ENCODE measurements at regions of chr4 and their contacts with region 1.

Region 1: DNA sequence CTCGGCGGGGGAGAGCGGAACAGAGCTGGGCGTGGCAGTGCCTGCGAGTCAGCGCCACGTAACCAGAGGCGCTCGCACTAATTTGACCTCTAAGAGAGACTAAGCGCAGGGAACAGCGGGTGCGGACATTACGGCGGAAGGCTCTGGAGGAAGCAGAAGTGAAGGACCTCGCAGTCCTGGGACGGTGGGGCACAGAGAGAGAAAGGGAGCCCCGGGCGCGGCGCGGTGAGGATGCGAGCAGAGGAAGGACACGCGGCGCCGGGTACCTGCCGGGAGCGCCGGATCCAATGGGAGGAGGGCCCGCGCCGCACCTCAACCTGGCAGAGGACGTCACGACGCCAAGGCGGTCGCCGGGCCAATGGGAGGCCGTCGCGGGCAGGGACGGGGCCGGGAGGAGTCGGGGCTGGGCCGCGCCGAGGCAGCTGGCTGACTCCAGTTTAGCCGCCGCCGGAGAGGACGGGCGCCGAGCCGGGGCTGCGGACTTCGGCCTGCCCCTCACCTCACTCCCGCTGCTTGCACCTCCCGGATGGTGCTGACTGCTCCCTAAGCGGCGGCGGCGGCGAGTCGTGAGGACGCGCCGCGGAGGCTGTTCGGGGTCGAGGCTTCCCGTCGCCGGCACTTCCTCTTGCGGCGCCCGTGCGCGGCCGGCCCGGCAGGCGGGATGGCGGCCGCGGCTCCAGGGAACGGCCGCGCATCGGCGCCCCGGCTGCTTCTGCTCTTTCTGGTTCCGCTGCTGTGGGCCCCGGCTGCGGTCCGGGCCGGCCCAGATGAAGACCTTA is at the start of gene TMEM165:
- DNase-seq: peak; percentile 77 to 92 (median 87)
- ATAC-seq: peak; percentile 94
- H3K4me3 ChIP-seq: peak within 1 kb of the TSS; percentile 88
- H3K4me3 Mint-ChIP-seq: peak within 1 kb of the TSS; percentile 94 to 99 (median 96)
- H3K27ac ChIP-seq: peak within 1 kb of the TSS; percentile 89
- H3K27ac Mint-ChIP-seq: peak within 1 kb of the TSS; percentile 89 to 99 (median 96)
- H3K4me1 ChIP-seq: peaks cover 27 to 31% of the 10 kb centered on the region in 2 donors
- H3K4me1 Mint-ChIP-seq: peaks cover 29 to 49% (median 39%) of the 10 kb centered on the region in 7 donors
- H3K27me3 ChIP-seq: no peaks in the 10 kb centered on the region
- H3K27me3 Mint-ChIP-seq: no peaks in the 10 kb centered on the region
- total RNA-seq, gene TMEM165: 53.1 to 80.9 (median 58.9) TPM

Region 2: DNA sequence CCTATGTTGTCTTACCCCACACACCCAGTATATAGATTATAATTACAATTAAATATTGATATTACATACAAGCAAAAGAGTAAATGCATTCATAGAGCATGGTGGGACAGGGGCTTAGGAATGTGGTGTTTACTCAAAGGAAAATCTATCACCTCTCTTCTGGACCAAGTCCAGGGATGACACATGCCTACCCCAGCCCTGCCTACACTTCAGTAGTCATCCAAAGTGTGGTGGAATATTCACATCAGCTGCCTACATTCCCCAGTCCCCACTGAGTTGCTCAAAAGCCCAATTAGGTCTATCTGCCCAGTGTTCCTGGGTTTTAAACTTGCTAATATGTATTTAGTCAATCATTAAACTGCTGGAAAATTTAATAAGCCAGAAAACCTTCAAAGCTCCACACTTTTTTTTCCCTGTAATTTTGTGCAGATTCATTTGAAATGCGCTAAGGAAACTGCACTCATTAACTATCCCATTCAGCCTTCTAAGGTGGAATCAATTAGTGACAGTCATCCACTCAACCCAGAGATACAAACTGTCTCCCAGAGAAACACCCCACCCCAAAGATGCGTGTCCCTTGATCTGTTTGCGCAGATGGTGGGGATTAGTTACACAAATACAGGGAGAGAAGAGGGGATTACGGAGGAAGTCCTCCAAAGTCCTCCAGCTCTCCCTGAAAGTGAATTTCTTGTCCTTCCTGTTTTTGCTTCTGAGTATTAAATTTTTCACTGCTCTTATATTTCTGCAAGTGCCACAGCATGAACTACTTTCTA is 178.7 kb before region 1 on chr4:
- CTCF ChIA-PET with region 1: no interaction called
- POLR2A ChIA-PET with region 1: no interaction called
- intact Hi-C with region 1: no loop called
- DNase-seq: no peak
- ATAC-seq: no peak
- H3K4me3 ChIP-seq: no peak overlapping the region
- H3K4me3 Mint-ChIP-seq: no peak overlapping the region
- H3K27ac ChIP-seq: no peak overlapping the region
- H3K27ac Mint-ChIP-seq: no peak overlapping the region
- H3K4me1 ChIP-seq: no peaks in the 10 kb centered on the region
- H3K4me1 Mint-ChIP-seq: peaks cover 0 to 4% (median 0%) of the 10 kb centered on the region in 7 donors
- H3K27me3 ChIP-seq: peaks cover 0 to 2% of the 10 kb centered on the region in 2 donors
- H3K27me3 Mint-ChIP-seq: peaks cover 0 to 17% (median 12%) of the 10 kb centered on the region in 5 donors

Region 3: DNA sequence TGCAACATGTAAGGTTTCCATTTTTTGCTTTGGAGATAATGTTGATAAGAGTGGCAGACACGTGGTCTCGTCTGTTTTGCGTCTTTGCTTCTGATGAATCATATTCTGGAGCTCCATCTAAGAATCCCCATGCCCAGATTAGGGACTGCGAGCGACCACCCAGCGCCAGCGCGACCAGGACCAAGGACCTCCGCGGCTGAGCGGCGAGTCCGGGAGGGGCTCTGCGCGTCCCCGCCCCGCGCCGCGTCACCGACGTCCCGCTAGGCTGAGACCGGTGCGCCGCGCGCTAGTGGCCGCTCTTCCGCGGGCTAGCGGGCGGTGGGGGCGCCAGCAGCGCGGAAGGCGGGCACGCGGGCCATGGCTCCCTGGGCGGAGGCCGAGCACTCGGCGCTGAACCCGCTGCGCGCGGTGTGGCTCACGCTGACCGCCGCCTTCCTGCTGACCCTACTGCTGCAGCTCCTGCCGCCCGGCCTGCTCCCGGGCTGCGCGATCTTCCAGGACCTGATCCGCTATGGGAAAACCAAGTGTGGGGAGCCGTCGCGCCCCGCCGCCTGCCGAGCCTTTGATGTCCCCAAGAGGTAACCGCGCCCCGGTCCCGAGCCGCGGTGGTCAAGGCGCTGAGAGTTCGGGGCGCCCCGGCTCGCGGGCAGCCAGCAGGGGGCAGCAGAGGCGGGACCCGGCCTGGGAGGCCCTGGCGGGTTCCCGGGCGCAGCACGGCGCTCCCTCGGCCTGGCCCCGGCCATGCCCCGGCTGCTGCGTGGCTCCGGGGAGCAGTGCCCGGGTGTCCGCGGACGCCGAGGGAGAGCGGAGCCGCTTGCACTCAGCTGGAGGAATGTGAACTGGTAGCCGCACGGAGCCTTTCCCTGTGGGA is 49.5 kb before region 1 on chr4 and contains the start of gene SRD5A3:
- CTCF ChIA-PET with region 1: interaction called, 23 read pairs
- POLR2A ChIA-PET with region 1: interaction called, 6 read pairs
- intact Hi-C with region 1: loop called (anchors 1 kb)
- DNase-seq: peak; percentile 53 to 92 (median 72)
- ATAC-seq: peak; percentile 97
- H3K4me3 ChIP-seq: peak within 1 kb of the TSS; percentile 79
- H3K4me3 Mint-ChIP-seq: peak within 1 kb of the TSS; percentile 83 to 94 (median 90)
- H3K27ac ChIP-seq: peak within 1 kb of the TSS; percentile 69
- H3K27ac Mint-ChIP-seq: peak within 1 kb of the TSS; percentile 70 to 91 (median 87)
- H3K4me1 ChIP-seq: peaks cover 6 to 8% of the 10 kb centered on the region in 2 donors
- H3K4me1 Mint-ChIP-seq: peaks cover 8 to 23% (median 19%) of the 10 kb centered on the region in 7 donors
- H3K27me3 ChIP-seq: no peaks in the 10 kb centered on the region
- H3K27me3 Mint-ChIP-seq: no peaks in the 10 kb centered on the region
- total RNA-seq, gene SRD5A3: 1.9 to 8.5 (median 4.5) TPM

Region 4: GRCh38 chr4:55435141-55435841 is 39.6 kb after region 1 on chr4:
- CTCF ChIA-PET with region 1: interaction called, 4 read pairs
- POLR2A ChIA-PET with region 1: interaction called, 4 read pairs
- intact Hi-C with region 1: loop called (anchors 5 kb)
- DNase-seq: peak in 1 of 9 donors; percentile 4
- ATAC-seq: peak; percentile 49
- H3K4me3 ChIP-seq: no peak overlapping the region
- H3K4me3 Mint-ChIP-seq: peak overlapping the region in 1 of 10 donors; percentile 62
- H3K27ac ChIP-seq: no peak overlapping the region
- H3K27ac Mint-ChIP-seq: peak overlapping the region in 7 of 9 donors; percentile 5 to 83 (median 69)
- H3K4me1 ChIP-seq: peaks cover 0 to 6% of the 10 kb centered on the region in 2 donors
- H3K4me1 Mint-ChIP-seq: peaks cover 5 to 17% (median 12%) of the 10 kb centered on the region in 7 donors
- H3K27me3 ChIP-seq: no peaks in the 10 kb centered on the region
- H3K27me3 Mint-ChIP-seq: no peaks in the 10 kb centered on the region

Region 5: GRCh38 chr4:55853484-55854046 is 457.8 kb after region 1 on chr4 and contains the start of gene EXOC1:
- CTCF ChIA-PET with region 1: no interaction called
- POLR2A ChIA-PET with region 1: no interaction called
- intact Hi-C with region 1: loop called (anchors 1 kb)
- DNase-seq: peak; percentile 93 to 98 (median 94)
- ATAC-seq: peak; percentile 99
- H3K4me3 ChIP-seq: peak within 1 kb of the TSS; percentile 84
- H3K4me3 Mint-ChIP-seq: peak within 1 kb of the TSS in 2 of 10 donors; percentile 34 to 69
- H3K27ac ChIP-seq: peak within 1 kb of the TSS; percentile 87
- H3K27ac Mint-ChIP-seq: peak within 1 kb of the TSS in 7 of 9 donors; percentile 75 to 94 (median 90)
- H3K4me1 ChIP-seq: peaks cover 26 to 31% of the 10 kb centered on the region in 2 donors
- H3K4me1 Mint-ChIP-seq: peaks cover 22 to 48% (median 42%) of the 10 kb centered on the region in 7 donors
- H3K27me3 ChIP-seq: no peaks in the 10 kb centered on the region
- H3K27me3 Mint-ChIP-seq: no peaks in the 10 kb centered on the region
- total RNA-seq, gene EXOC1: 20.3 to 46.7 (median 32.1) TPM

Region 6: DNA sequence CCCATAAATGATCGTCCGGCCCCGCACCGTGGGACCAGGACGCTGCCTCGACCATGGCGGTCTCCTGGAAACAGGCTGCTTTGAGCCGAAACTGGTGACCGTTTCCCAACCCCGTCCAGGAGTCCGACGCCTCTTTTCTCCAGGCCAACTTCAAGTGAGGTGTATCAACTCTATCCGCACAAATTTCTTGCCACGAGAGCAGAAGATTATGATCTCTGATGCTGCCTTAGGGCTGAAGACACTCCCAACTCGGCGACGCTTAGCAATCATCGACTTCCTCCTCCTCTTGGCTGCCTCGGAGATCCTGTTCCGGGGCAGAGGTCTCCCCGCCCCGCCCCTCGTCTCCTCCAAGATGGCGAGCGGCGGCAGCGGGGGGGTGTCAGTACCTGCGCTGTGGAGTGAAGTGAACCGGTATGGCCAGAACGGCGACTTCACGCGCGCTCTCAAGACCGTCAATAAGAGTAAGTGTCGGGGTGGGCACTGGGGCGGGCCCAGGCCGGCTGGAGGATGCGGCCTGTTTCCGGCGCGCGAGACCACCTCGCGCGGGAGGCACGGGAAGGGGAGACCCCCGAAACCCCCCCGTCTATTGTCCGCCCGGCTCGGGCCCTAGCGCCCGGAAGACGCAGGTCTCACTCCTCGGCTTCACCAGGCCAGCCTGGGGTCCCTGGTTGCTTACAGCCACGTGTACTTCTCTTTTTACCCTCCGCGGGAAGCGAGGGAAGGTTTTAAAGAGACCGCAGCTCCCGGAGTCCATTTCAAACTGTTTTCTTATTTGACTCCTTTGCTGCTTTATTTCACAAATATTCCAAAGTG is 1071.8 kb after region 1 on chr4 and contains the start of gene SRP72:
- CTCF ChIA-PET with region 1: no interaction called
- POLR2A ChIA-PET with region 1: no interaction called
- intact Hi-C with region 1: loop called in 1 of 2 experiments (anchors 10 kb)
- DNase-seq: peak; percentile 80 to 95 (median 88)
- ATAC-seq: peak; percentile 98
- H3K4me3 ChIP-seq: peak within 1 kb of the TSS; percentile 98
- H3K4me3 Mint-ChIP-seq: peak within 1 kb of the TSS; percentile 93 to 100 (median 96)
- H3K27ac ChIP-seq: peak within 1 kb of the TSS; percentile 90
- H3K27ac Mint-ChIP-seq: peak within 1 kb of the TSS; percentile 94 to 99 (median 96)
- H3K4me1 ChIP-seq: peaks cover 25 to 29% of the 10 kb centered on the region in 2 donors
- H3K4me1 Mint-ChIP-seq: peaks cover 46 to 68% (median 62%) of the 10 kb centered on the region in 7 donors
- H3K27me3 ChIP-seq: no peaks in the 10 kb centered on the region
- H3K27me3 Mint-ChIP-seq: no peaks in the 10 kb centered on the region
- total RNA-seq, gene SRP72: 98.4 to 145 (median 109) TPM